B cell (primary cell): ENCODE measurements at regions of chr4 and their contacts with region 1.

Region 1: GRCh38 chr4:113684534-113685091 is 76.9 kb downstream of the CAMK2D start:
- DNase-seq: no peak
- ATAC-seq: no peak
- H3K4me3 ChIP-seq: no peak overlapping the region
- H3K4me3 Mint-ChIP-seq: no peak overlapping the region
- H3K27ac ChIP-seq: peak overlapping the region in 1 of 2 donors; percentile 83
- H3K27ac Mint-ChIP-seq: peak overlapping the region; percentile 62
- H3K4me1 ChIP-seq: peaks cover 33 to 38% of the 10 kb centered on the region in 2 donors
- H3K4me1 Mint-ChIP-seq: peaks cover 54% of the 10 kb centered on the region
- H3K27me3 ChIP-seq: no peaks in the 10 kb centered on the region
- H3K27me3 Mint-ChIP-seq: no peaks in the 10 kb centered on the region
- CTCF ChIP-seq: no peak

Region 2: GRCh38 chr4:113718252-113718651 is 33.6 kb after region 1 on chr4:
- CTCF ChIA-PET with region 1: no interaction called
- POLR2A ChIA-PET with region 1: no interaction called
- intact Hi-C with region 1: loop called (anchors 5 kb)
- DNase-seq: no peak
- ATAC-seq: no peak
- H3K4me3 ChIP-seq: no peak overlapping the region
- H3K4me3 Mint-ChIP-seq: no peak overlapping the region
- H3K27ac ChIP-seq: no peak overlapping the region
- H3K27ac Mint-ChIP-seq: peak overlapping the region; percentile 65
- H3K4me1 ChIP-seq: peaks cover 0 to 14% of the 10 kb centered on the region in 2 donors
- H3K4me1 Mint-ChIP-seq: peaks cover 50% of the 10 kb centered on the region
- H3K27me3 ChIP-seq: no peaks in the 10 kb centered on the region
- H3K27me3 Mint-ChIP-seq: no peaks in the 10 kb centered on the region
- CTCF ChIP-seq: no peak